Sigmoid colon (tissue), 7 donors: ENCODE measurements at regions of chr5 and their contacts with region 1.

Region 1: GRCh38 chr5:123367739-123368138 is 55.5 kb downstream of the CEP120 start:
- DNase-seq: no peak
- H3K4me3 ChIP-seq: no peak overlapping the region
- H3K27ac ChIP-seq: no peak overlapping the region
- H3K4me1 ChIP-seq: peaks cover 0 to 28% (median 17%) of the 10 kb centered on the region in 4 donors
- H3K27me3 ChIP-seq: no peaks in the 10 kb centered on the region
- CTCF ChIP-seq: peak in 2 of 4 experiments; percentile 11 to 35
- EP300 ChIP-seq: no peak
- POLR2A ChIP-seq: no peak

Region 2: GRCh38 chr5:122500245-122501075 is 867.3 kb before region 1 on chr5:
- intact Hi-C with region 1: loop called (anchors 5 kb)
- DNase-seq: peak; percentile 70
- H3K4me3 ChIP-seq: no peak overlapping the region
- H3K27ac ChIP-seq: peak overlapping the region in 3 of 4 donors; percentile 2 to 45 (median 16)
- H3K4me1 ChIP-seq: peaks cover 0 to 13% (median 4%) of the 10 kb centered on the region in 4 donors
- H3K27me3 ChIP-seq: no peaks in the 10 kb centered on the region
- CTCF ChIP-seq: peak in 1 of 4 experiments; percentile 56
- EP300 ChIP-seq: no peak
- POLR2A ChIP-seq: no peak

Region 3: DNA sequence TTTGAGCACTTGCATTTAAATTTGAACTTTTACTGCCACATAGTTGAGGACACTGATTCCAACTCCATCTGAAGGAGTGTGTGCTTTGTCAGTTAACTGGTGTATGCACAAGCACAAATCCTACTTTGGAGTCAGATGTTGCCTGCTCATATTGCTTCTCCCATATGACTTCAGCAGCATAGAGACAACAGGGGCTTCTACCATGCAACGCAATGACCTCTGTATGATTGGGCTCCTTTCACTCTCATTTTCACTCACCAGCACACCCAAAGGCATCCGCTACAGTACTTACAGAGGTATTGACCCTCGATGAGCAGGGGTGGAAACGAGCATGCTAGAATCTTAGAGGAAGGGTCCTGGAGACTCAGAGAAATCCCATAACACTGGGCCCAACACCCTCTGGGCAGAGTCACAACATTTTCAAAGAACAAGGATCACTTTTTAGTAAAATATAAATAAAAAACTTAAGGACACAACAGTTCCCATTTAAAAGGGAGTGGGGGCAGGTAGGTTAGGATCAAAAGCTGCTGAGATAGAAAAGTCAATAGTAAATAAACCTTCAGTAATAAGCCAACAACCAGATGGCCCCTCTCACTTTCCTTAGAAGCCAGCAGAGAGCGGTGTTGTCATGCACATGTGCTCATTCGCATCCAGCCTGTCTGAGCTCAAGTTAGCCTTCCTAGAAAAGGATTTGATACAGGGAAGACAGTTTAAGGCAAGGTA is 851.9 kb before region 1 on chr5:
- intact Hi-C with region 1: loop called (anchors 5 kb)
- DNase-seq: peak; percentile 67
- H3K4me3 ChIP-seq: no peak overlapping the region
- H3K27ac ChIP-seq: no peak overlapping the region
- H3K4me1 ChIP-seq: no peaks in the 10 kb centered on the region
- H3K27me3 ChIP-seq: no peaks in the 10 kb centered on the region
- CTCF ChIP-seq: peak; percentile 26 to 47 (median 42)
- EP300 ChIP-seq: no peak
- POLR2A ChIP-seq: no peak

Region 4: GRCh38 chr5:122653087-122653959 is 714.4 kb before region 1 on chr5:
- intact Hi-C with region 1: no loop called
- DNase-seq: no peak
- H3K4me3 ChIP-seq: no peak overlapping the region
- H3K27ac ChIP-seq: no peak overlapping the region
- H3K4me1 ChIP-seq: no peaks in the 10 kb centered on the region
- H3K27me3 ChIP-seq: no peaks in the 10 kb centered on the region
- CTCF ChIP-seq: no peak
- EP300 ChIP-seq: no peak
- POLR2A ChIP-seq: no peak

Region 5: GRCh38 chr5:122774861-122775549 is 592.7 kb before region 1 on chr5 and contains the start of gene SNX2:
- intact Hi-C with region 1: loop called (anchors 10 kb)
- DNase-seq: peak; percentile 96
- H3K4me3 ChIP-seq: peak within 1 kb of the TSS; percentile 68 to 94 (median 86)
- H3K27ac ChIP-seq: peak within 1 kb of the TSS; percentile 80 to 94 (median 88)
- H3K4me1 ChIP-seq: peaks cover 0 to 34% (median 19%) of the 10 kb centered on the region in 4 donors
- H3K27me3 ChIP-seq: no peaks in the 10 kb centered on the region
- CTCF ChIP-seq: peak in 1 of 4 experiments; percentile 20
- EP300 ChIP-seq: no peak
- POLR2A ChIP-seq: peak; percentile 61 to 65
- total RNA-seq, gene SNX2: 50.2 to 111 (median 82.3) TPM

Region 6: DNA sequence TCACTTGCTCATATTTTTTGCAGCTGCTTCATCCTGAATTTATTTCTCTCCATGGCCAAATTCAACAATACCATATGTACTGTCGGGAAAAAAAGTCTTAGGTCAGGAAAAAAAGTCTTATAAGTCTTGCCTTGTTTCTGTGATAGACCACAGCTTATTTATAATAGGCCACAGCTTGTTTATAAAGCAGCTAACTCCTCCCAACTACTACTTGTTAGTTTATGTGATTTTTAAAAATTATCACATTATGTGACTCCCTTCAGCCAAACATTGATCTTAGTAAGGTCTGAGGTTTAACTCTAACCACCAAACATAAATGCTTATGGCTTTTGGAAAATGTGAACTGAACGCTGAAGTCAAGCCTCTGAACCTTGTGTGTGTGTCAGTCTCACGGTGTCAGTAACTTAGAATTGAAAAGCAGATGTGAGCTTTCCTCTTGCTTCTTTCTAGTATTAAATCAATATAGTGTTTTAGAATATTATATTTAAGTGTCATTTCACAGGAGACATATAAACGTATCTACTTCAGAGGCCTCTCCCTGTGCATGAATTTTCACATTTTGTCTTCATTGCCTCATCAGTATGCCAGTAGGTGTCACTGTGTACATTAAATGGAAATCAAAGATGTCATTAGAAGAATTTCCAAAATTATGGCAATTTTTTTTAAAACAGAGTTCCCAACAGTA is 471.0 kb before region 1 on chr5:
- intact Hi-C with region 1: loop called (anchors 5 kb)
- DNase-seq: no peak
- H3K4me3 ChIP-seq: no peak overlapping the region
- H3K27ac ChIP-seq: no peak overlapping the region
- H3K4me1 ChIP-seq: peaks cover 0 to 7% (median 3%) of the 10 kb centered on the region in 4 donors
- H3K27me3 ChIP-seq: no peaks in the 10 kb centered on the region
- CTCF ChIP-seq: peak in 3 of 4 experiments; percentile 26 to 63 (median 55)
- EP300 ChIP-seq: no peak
- POLR2A ChIP-seq: no peak